Common myeloid progenitor, CD34-positive (primary cell): ENCODE measurements at regions of chr6 and their contacts with region 1.

Region 1: DNA sequence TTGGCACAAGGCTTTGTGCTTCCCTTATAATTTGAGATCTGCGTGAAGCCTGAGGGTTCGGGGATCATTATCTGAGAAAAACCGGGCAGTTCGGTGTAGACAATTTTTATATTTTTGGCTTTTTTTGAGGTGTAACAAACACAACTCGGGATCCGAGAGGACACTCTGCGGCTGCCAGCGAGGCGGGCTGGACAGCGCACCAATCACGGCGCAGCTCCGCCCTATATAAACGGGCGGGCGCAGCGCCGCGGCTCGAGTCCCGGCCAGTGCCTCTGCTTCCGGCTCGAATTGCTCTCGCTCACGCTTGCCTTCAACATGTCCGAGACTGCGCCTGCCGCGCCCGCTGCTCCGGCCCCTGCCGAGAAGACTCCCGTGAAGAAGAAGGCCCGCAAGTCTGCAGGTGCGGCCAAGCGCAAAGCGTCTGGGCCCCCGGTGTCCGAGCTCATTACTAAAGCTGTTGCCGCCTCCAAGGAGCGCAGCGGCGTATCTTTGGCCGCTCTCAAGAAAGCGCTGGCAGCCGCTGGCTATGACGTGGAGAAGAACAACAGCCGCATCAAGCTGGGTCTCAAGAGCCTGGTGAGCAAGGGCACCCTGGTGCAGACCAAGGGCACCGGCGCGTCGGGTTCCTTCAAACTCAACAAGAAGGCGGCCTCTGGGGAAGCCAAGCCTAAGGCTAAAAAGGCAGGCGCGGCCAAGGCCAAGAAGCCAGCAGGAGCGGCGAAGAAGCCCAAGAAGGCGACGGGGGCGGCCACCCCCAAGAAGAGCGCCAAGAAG is 69.0 kb downstream of the HFE start:
- DNase-seq: peak; percentile 79 to 91 (median 90)
- H3K4me3 ChIP-seq: peak overlapping the region; percentile 78 to 94 (median 92)
- H3K27ac ChIP-seq: peak overlapping the region; percentile 50 to 87
- H3K4me1 ChIP-seq: peaks cover 10 to 31% (median 23%) of the 10 kb centered on the region in 4 experiments
- H3K27me3 ChIP-seq: no peaks in the 10 kb centered on the region

Region 2: GRCh38 chr6:25404693-25405169 is 751.5 kb before region 1 on chr6:
- CTCF ChIA-PET with region 1: no interaction called
- POLR2A ChIA-PET with region 1: no interaction called
- DNase-seq: peak; percentile 38 to 82 (median 68)
- H3K4me3 ChIP-seq: peak overlapping the region in 6 of 7 experiments; percentile 39 to 65 (median 52)
- H3K27ac ChIP-seq: peak overlapping the region; percentile 35 to 70
- H3K4me1 ChIP-seq: peaks cover 19 to 32% (median 22%) of the 10 kb centered on the region in 4 experiments
- H3K27me3 ChIP-seq: no peaks in the 10 kb centered on the region

Region 3: GRCh38 chr6:25922301-25922700 is 234.0 kb before region 1 on chr6:
- CTCF ChIA-PET with region 1: no interaction called
- POLR2A ChIA-PET with region 1: no interaction called
- DNase-seq: no peak
- H3K4me3 ChIP-seq: no peak overlapping the region
- H3K27ac ChIP-seq: no peak overlapping the region
- H3K4me1 ChIP-seq: peaks cover 0 to 7% (median 4%) of the 10 kb centered on the region in 4 experiments
- H3K27me3 ChIP-seq: no peaks in the 10 kb centered on the region

Region 4: GRCh38 chr6:26103770-26104456 is 52.4 kb before region 1 on chr6:
- CTCF ChIA-PET with region 1: interaction called, 4 read pairs
- POLR2A ChIA-PET with region 1: interaction called, 13 read pairs
- DNase-seq: peak; percentile 95 to 98 (median 97)
- H3K4me3 ChIP-seq: peak overlapping the region; percentile 53 to 84 (median 67)
- H3K27ac ChIP-seq: peak overlapping the region; percentile 65 to 81
- H3K4me1 ChIP-seq: peaks cover 6 to 20% (median 14%) of the 10 kb centered on the region in 4 experiments
- H3K27me3 ChIP-seq: no peaks in the 10 kb centered on the region

Region 5: DNA sequence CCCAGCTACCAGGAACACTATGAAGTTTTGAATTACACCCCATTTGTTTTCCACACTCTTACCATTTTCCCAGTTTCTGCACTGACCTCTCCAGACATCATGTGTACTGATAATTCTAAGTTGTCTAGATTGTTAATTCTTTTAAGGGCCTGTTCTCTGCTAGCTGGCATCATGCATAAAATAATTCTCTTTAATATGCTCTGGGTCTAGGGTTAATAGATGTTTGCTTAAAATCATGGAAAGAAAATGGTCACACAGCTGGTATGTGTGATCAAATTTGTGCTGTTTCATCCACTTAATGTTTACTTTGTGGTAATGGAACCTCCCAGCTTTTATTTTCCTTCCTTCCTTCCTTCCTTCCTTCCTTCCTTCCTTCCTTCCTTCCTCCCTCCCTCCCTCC is 19.9 kb before region 1 on chr6:
- CTCF ChIA-PET with region 1: interaction called, 13 read pairs
- POLR2A ChIA-PET with region 1: interaction called, 8 read pairs
- DNase-seq: peak in 2 of 3 donors; percentile 36 to 49
- H3K4me3 ChIP-seq: no peak overlapping the region
- H3K27ac ChIP-seq: no peak overlapping the region
- H3K4me1 ChIP-seq: peaks cover 0 to 5% (median 0%) of the 10 kb centered on the region in 4 experiments
- H3K27me3 ChIP-seq: no peaks in the 10 kb centered on the region

Region 6: DNA sequence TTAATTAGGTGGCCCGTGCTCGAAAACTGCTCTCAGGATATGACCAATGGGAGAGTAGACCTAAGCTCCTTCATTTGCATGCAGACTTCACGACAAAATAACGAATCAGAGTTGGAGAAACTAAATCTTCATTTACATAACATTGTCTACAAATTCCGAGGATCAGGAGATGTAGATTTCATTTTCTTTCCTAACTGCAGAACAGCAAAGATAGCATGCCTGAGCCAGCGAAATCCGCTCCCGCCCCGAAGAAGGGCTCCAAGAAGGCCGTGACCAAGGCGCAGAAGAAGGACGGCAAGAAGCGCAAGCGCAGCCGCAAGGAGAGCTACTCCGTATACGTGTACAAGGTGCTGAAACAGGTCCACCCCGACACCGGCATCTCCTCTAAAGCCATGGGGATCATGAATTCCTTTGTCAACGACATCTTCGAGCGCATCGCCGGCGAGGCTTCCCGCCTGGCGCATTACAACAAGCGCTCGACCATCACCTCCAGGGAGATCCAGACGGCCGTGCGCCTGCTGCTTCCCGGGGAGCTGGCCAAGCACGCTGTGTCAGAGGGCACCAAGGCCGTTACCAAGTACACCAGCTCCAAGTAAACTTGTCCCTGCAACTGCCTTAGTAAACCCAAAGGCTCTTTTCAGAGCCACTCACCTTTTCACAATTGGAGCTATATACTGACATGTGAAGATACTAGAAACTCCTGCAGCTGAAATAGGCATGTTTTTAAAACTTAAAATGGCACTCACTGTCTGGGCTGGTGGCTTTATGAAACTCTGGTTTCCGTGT is 27.5 kb after region 1 on chr6:
- CTCF ChIA-PET with region 1: interaction called, 4 read pairs
- POLR2A ChIA-PET with region 1: interaction called, 10 read pairs
- DNase-seq: peak; percentile 87 to 92 (median 91)
- H3K4me3 ChIP-seq: peak overlapping the region; percentile 46 to 79 (median 70)
- H3K27ac ChIP-seq: peak overlapping the region in 1 of 2 experiments; percentile 70
- H3K4me1 ChIP-seq: peaks cover 9 to 42% (median 27%) of the 10 kb centered on the region in 4 experiments
- H3K27me3 ChIP-seq: no peaks in the 10 kb centered on the region

Region 7: DNA sequence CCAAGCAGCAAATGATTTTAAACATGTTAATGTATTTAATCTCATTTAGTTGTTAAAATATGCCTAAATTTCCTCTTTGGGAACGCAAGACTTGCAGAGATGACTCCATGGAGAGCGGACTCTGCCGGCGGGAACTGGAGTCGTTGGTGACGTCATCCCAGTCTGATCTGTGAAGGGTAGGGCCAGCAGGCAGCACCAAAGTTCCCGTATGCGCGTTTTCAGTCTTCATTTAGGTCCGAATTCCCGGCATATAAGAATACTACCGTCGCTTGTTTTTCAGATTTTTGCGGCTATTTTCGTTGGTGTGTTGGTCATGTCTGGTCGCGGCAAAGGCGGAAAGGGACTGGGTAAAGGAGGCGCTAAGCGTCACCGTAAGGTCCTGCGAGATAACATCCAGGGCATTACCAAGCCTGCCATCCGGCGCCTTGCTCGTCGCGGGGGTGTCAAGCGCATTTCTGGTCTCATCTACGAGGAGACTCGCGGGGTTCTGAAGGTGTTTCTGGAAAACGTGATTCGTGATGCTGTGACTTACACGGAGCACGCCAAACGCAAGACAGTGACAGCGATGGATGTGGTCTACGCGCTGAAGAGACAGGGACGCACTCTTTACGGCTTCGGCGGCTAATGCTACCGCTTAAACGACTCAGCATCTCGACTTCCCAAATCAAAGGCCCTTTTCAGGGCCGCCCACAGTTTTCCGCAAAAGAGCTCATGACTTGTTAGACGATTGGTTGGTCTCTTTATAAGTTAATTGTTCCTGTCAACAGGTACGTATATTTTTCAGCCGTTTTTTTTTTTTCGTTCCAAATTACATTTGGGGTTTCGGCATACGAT is 48.3 kb after region 1 on chr6:
- CTCF ChIA-PET with region 1: interaction called, 3 read pairs
- POLR2A ChIA-PET with region 1: interaction called, 15 read pairs
- DNase-seq: peak; percentile 98 to 99 (median 99)
- H3K4me3 ChIP-seq: peak overlapping the region; percentile 75 to 97 (median 87)
- H3K27ac ChIP-seq: peak overlapping the region; percentile 94 to 97
- H3K4me1 ChIP-seq: peaks cover 19 to 50% (median 38%) of the 10 kb centered on the region in 4 experiments
- H3K27me3 ChIP-seq: no peaks in the 10 kb centered on the region

Region 8: GRCh38 chr6:26363882-26364701 is 207.8 kb after region 1 on chr6:
- CTCF ChIA-PET with region 1: no interaction called
- POLR2A ChIA-PET with region 1: no interaction called
- DNase-seq: peak in 1 of 3 donors; percentile 25
- H3K4me3 ChIP-seq: peak overlapping the region in 6 of 7 experiments; percentile 79 to 99 (median 94)
- H3K27ac ChIP-seq: peak overlapping the region; percentile 82 to 92
- H3K4me1 ChIP-seq: peaks cover 18 to 33% (median 23%) of the 10 kb centered on the region in 4 experiments
- H3K27me3 ChIP-seq: no peaks in the 10 kb centered on the region